ENCODE measurements at regions of chr3 and their contacts with region 1.

Region 1: GRCh38 chr3:128322066-128323022 is 144.3 kb downstream of the DNAJB8 start:
- DNase-seq: peak; percentile 25 to 83 (median 63)
- ATAC-seq: peak; percentile 64
- H3K4me3 ChIP-seq: no peak overlapping the region
- H3K4me3 Mint-ChIP-seq: no peak overlapping the region
- H3K27ac ChIP-seq: no peak overlapping the region
- H3K27ac Mint-ChIP-seq: peak overlapping the region; percentile 69
- H3K4me1 ChIP-seq: peaks cover 59% of the 10 kb centered on the region
- H3K4me1 Mint-ChIP-seq: peaks cover 70% of the 10 kb centered on the region
- H3K27me3 ChIP-seq: no peaks in the 10 kb centered on the region
- H3K27me3 Mint-ChIP-seq: no peaks in the 10 kb centered on the region
- CTCF ChIP-seq: peak; percentile 42

Region 2: DNA sequence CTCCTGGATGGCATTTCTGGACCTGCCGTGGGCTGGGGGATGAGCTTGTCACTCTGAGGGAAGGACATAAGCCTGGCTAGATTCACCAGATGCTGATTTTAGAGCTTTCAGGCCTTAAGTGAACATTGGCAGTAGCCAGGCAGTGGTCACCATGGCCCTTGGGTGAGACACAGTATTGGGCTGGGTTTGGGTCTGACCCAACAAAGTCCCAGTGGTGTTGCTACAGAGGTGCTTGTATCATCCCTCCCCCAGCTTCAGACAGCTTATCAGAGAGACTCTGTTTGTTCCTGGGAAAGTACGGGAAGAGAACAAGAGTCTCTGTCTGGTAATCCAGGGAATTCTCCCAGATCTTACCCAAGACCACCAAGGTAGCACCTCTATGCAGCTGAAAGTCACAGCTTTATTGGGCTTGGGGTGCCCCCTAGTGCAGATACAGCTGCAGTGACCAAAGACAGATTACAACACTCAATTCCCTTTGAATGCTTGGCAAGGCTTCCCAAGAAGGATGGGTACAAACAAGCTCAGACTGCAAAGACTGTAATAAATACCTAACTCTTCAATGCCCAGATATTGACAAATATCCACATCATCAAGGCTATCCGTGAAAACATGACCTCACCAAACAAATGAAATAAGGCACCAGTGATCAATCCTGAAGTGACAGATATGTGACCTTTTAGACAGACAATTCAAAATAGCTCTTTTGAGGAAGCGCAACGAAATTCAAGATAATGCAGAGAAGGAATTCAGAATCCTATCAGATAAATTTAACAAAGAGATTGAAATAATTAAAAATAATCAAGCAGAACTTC is 188.9 kb before region 1 on chr3:
- CTCF ChIA-PET with region 1: interaction called, 10 read pairs
- POLR2A ChIA-PET with region 1: no interaction called
- intact Hi-C with region 1: no loop called
- DNase-seq: peak; percentile 18 to 75 (median 57)
- ATAC-seq: peak; percentile 77
- H3K4me3 ChIP-seq: no peak overlapping the region
- H3K4me3 Mint-ChIP-seq: no peak overlapping the region
- H3K27ac ChIP-seq: no peak overlapping the region
- H3K27ac Mint-ChIP-seq: no peak overlapping the region
- H3K4me1 ChIP-seq: no peaks in the 10 kb centered on the region
- H3K4me1 Mint-ChIP-seq: no peaks in the 10 kb centered on the region
- H3K27me3 ChIP-seq: no peaks in the 10 kb centered on the region
- H3K27me3 Mint-ChIP-seq: peaks cover 3% of the 10 kb centered on the region
- CTCF ChIP-seq: peak; percentile 58

Region 3: GRCh38 chr3:128226795-128227395 is 95.4 kb before region 1 on chr3:
- CTCF ChIA-PET with region 1: interaction called, 76 read pairs
- POLR2A ChIA-PET with region 1: interaction called, 3 read pairs
- intact Hi-C with region 1: loop called (anchors 1 kb)
- DNase-seq: peak in 7 of 9 experiments; percentile 10 to 66 (median 26)
- ATAC-seq: peak; percentile 55
- H3K4me3 ChIP-seq: no peak overlapping the region
- H3K4me3 Mint-ChIP-seq: no peak overlapping the region
- H3K27ac ChIP-seq: no peak overlapping the region
- H3K27ac Mint-ChIP-seq: no peak overlapping the region
- H3K4me1 ChIP-seq: no peaks in the 10 kb centered on the region
- H3K4me1 Mint-ChIP-seq: peaks cover 10% of the 10 kb centered on the region
- H3K27me3 ChIP-seq: no peaks in the 10 kb centered on the region
- H3K27me3 Mint-ChIP-seq: no peaks in the 10 kb centered on the region
- CTCF ChIP-seq: peak; percentile 57

Region 4: DNA sequence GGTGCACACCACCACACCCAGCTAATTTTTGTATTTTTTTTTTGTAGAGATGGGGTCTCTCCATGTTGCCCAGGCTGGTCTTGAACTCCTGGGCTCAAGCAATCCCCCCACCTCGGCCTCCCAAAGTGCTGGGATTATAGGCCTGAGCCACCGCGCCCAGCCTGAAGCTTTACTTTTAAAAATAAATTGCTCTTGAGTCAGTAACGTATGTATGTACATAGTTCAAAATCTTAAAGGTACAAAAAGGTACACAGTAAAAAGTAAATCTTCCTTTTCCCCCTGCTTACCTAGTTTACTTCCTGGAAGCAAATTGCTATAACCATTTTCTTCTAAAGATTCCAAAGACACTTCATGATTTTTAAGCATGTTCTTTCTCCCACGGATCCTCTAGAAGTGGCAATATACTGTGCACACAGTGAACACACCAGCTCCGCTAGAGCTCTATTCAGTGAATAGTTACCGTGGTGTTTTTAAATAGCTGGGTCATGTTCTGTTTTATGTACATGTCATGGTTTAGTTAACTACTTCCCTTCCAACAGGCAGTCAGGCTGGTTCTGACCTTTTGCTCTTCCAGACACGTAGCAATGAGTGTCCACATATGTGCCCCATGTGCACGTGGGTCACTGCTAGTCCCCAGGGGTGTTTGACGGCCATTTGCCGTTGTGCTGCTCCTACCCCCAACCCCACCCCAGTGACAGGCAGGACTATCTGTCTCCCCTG is 87.0 kb before region 1 on chr3:
- CTCF ChIA-PET with region 1: interaction called, 12 read pairs
- POLR2A ChIA-PET with region 1: interaction called, 3 read pairs
- intact Hi-C with region 1: no loop called
- DNase-seq: no peak
- ATAC-seq: no peak
- H3K4me3 ChIP-seq: no peak overlapping the region
- H3K4me3 Mint-ChIP-seq: no peak overlapping the region
- H3K27ac ChIP-seq: no peak overlapping the region
- H3K27ac Mint-ChIP-seq: no peak overlapping the region
- H3K4me1 ChIP-seq: no peaks in the 10 kb centered on the region
- H3K4me1 Mint-ChIP-seq: peaks cover 33% of the 10 kb centered on the region
- H3K27me3 ChIP-seq: no peaks in the 10 kb centered on the region
- H3K27me3 Mint-ChIP-seq: no peaks in the 10 kb centered on the region
- CTCF ChIP-seq: no peak

Region 5: GRCh38 chr3:128297401-128298138 is 24.8 kb before region 1 on chr3:
- CTCF ChIA-PET with region 1: interaction called, 13 read pairs
- POLR2A ChIA-PET with region 1: interaction called, 3 read pairs
- intact Hi-C with region 1: no loop called
- DNase-seq: peak in 2 of 9 experiments; percentile 8 to 47
- ATAC-seq: no peak
- H3K4me3 ChIP-seq: no peak overlapping the region
- H3K4me3 Mint-ChIP-seq: peak overlapping the region; percentile 3
- H3K27ac ChIP-seq: no peak overlapping the region
- H3K27ac Mint-ChIP-seq: no peak overlapping the region
- H3K4me1 ChIP-seq: peaks cover 50% of the 10 kb centered on the region
- H3K4me1 Mint-ChIP-seq: peaks cover 73% of the 10 kb centered on the region
- H3K27me3 ChIP-seq: no peaks in the 10 kb centered on the region
- H3K27me3 Mint-ChIP-seq: no peaks in the 10 kb centered on the region
- CTCF ChIP-seq: no peak

Region 6: GRCh38 chr3:128307029-128307633 is 15.2 kb before region 1 on chr3:
- CTCF ChIA-PET with region 1: interaction called, 64 read pairs
- POLR2A ChIA-PET with region 1: interaction called, 6 read pairs
- intact Hi-C with region 1: loop called in 1 of 2 experiments (anchors 2 kb)
- DNase-seq: peak in 3 of 9 experiments; percentile 9 to 48 (median 39)
- ATAC-seq: no peak
- H3K4me3 ChIP-seq: no peak overlapping the region
- H3K4me3 Mint-ChIP-seq: no peak overlapping the region
- H3K27ac ChIP-seq: no peak overlapping the region
- H3K27ac Mint-ChIP-seq: no peak overlapping the region
- H3K4me1 ChIP-seq: peaks cover 6% of the 10 kb centered on the region
- H3K4me1 Mint-ChIP-seq: peaks cover 28% of the 10 kb centered on the region
- H3K27me3 ChIP-seq: no peaks in the 10 kb centered on the region
- H3K27me3 Mint-ChIP-seq: no peaks in the 10 kb centered on the region
- CTCF ChIP-seq: no peak

Region 7: DNA sequence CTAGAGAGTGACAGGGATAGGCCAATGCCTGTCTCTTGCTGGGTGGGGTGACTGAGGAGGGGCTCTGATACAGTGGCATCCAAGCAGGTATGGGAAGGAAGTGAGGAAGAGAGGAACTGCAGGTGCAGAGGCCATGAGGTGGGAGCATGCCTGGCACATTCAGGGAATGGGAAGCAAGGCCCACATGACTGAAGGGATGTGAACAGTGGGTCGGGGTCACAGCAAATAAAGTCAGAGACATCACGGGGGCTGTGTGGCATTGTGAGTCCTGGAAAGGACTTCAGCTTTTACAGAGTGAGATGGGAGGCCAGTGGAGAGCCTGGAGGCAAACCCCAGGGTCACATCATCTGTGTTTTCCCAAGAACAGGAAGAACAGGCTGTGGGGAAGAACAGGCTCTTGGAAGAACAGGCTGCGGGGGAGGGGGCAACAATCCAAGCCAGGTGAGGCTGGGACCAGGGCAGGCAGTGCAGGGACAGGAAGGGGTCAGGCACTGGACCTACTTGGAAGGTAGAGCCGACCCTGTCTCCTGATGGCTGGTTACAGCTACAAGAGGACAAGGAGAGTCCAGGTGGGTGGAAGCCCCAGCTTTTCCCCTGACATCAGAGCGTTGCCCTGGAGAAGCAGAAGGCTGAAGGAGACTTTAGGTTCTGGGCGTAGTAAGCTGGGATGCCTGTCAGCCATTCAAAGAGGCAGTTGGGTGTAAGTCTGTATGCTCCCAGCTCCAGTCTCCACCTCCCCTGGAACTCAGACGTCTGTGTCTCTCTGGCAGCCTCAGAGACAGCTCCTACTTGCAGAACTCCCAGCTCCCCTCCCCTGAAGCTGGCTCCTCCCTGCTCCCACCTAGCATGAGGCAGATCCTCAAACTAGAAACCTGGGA is 13.2 kb after region 1 on chr3:
- CTCF ChIA-PET with region 1: interaction called, 16 read pairs
- POLR2A ChIA-PET with region 1: no interaction called
- intact Hi-C with region 1: no loop called
- DNase-seq: no peak
- ATAC-seq: no peak
- H3K4me3 ChIP-seq: no peak overlapping the region
- H3K4me3 Mint-ChIP-seq: no peak overlapping the region
- H3K27ac ChIP-seq: no peak overlapping the region
- H3K27ac Mint-ChIP-seq: no peak overlapping the region
- H3K4me1 ChIP-seq: no peaks in the 10 kb centered on the region
- H3K4me1 Mint-ChIP-seq: no peaks in the 10 kb centered on the region
- H3K27me3 ChIP-seq: no peaks in the 10 kb centered on the region
- H3K27me3 Mint-ChIP-seq: no peaks in the 10 kb centered on the region
- CTCF ChIP-seq: no peak

Region 8: DNA sequence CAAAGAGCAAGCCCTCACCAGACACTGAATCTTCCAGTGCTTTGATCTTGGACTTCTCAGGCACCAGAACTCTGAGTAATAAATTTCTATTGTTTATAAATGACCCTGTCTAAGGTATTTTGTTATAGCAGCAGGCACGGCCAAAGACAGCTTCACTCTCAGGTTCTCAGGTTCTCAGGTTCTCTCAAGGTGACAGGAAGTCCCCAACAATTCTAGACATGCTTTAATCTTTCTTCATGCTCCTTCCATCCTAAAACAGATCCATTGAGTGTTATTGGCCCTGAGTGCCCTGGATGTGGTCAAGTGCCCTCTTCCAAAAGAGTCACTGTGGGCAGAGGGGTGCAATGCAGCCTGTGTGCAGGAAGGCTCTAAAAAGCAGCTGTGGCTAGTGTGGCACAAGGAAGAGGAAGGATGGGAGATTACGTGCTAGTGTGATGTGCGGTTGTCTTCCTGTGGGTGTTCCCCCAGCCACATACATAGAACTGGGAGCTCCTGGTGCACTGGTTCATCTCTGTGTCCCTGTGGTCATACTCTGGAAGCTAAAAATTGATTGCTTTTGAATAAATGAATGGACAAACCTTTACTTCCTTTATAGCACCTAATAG is 392.6 kb after region 1 on chr3:
- CTCF ChIA-PET with region 1: no interaction called
- POLR2A ChIA-PET with region 1: no interaction called
- intact Hi-C with region 1: no loop called
- DNase-seq: peak in 7 of 9 experiments; percentile 4 to 73 (median 38)
- ATAC-seq: peak; percentile 82
- H3K4me3 ChIP-seq: no peak overlapping the region
- H3K4me3 Mint-ChIP-seq: peak overlapping the region; percentile 59
- H3K27ac ChIP-seq: peak overlapping the region in 1 of 2 experiments; percentile 37
- H3K27ac Mint-ChIP-seq: peak overlapping the region; percentile 84
- H3K4me1 ChIP-seq: peaks cover 12% of the 10 kb centered on the region
- H3K4me1 Mint-ChIP-seq: peaks cover 18% of the 10 kb centered on the region
- H3K27me3 ChIP-seq: no peaks in the 10 kb centered on the region
- H3K27me3 Mint-ChIP-seq: no peaks in the 10 kb centered on the region
- CTCF ChIP-seq: no peak

Measured in CD8-positive, alpha-beta T cell (primary cell).